Right ventricle myocardium inferior (tissue), 1 donor: ENCODE measurements at regions of chr15 and their contacts with region 1.

Region 1: GRCh38 chr15:84929744-84930371 is 45.4 kb downstream of the SLC28A1 start:
- DNase-seq: no peak
- ATAC-seq: no peak

Region 2: GRCh38 chr15:84600851-84601838 is 328.7 kb before region 1 on chr15 and contains the start of gene ZSCAN2:
- intact Hi-C with region 1: loop called (anchors 5 kb)
- DNase-seq: peak; percentile 97
- ATAC-seq: peak; percentile 98
- total RNA-seq, gene ZSCAN2: 5.7 TPM

Region 3: GRCh38 chr15:84716036-84716799 is 213.6 kb before region 1 on chr15 and contains the start of gene SEC11A:
- intact Hi-C with region 1: loop called (anchors 5 kb)
- DNase-seq: peak; percentile 98
- ATAC-seq: peak; percentile 99
- total RNA-seq, gene SEC11A: 84.7 TPM

Region 4: DNA sequence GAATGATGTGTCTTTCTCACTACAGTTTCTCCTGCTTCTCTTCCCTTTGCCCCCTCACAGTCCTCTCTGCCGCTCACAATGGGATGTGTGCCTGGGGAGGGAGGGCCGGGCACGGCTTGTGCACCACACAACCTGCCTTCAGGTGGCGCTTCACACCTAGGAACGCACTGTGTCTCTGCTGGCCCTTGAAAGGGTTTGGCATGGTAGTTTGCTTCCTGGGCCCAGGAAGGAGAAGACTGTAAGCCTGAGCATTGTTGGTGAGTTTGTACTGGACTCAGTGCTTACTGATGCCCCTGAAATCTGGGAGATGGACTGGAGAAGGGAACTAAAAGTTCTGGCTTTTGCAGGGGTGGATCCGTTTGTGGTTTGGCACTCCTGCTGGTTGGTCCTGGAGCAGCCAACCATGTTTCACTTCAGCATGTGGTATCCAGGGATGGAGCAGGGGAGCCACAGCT is 103.5 kb before region 1 on chr15:
- intact Hi-C with region 1: loop called (anchors 5 kb)
- DNase-seq: no peak
- ATAC-seq: no peak

Region 5: DNA sequence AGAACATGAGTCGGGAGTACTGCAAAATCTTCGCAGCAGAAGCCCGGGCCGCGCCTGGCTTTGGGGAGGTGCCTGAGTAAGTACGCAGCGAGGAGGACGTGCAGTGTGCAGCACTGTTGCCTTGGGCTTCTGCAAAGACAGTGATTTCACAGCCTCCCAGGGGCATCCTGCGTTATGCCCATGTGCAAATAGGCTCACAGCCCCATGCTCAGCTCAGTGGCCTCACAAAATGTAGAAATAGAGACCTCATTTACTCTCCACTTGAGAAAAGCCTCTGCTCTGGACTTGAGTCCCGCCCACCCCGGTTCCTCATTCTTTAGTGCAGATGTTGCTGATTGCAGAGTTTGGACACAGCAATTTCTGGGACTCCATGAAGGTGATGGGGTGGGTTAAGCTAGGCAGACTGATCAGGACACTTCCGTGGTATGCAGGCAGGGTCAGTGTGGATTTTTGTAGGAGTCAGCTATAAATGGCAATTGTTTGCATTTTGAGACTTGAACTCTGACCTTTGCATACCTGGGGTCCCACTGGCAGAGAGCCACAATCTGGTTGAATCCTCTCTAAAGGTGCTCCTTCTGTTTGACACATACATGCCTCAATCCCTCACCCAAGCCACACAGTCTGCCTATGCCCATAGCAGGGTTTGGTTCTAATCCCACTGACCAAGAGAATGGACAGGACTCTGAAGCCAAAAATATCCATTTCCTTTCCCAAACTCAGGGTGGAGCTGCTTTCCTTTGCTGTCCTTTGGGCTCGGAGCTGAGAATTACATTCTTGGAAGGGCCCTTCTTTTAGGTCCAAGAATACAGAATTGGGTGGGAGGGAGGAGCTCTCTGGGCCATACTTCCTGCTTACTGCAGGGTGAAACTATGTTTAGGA is 66.1 kb before region 1 on chr15:
- intact Hi-C with region 1: loop called (anchors 5 kb)
- DNase-seq: no peak
- ATAC-seq: peak; percentile 52